ENCODE measurements at regions of chr20 and their contacts with region 1.

Region 1: GRCh38 chr20:43187476-43188233 is 2.1 kb downstream of the PTPRT start:
- DNase-seq: peak; percentile 8
- ATAC-seq: peak; percentile 63
- H3K4me3 ChIP-seq: no peak overlapping the region
- H3K27ac ChIP-seq: no peak overlapping the region
- H3K4me1 ChIP-seq: no peaks in the 10 kb centered on the region
- H3K27me3 ChIP-seq: peaks cover 6% of the 10 kb centered on the region; the same call in 1 of the 2 replicates
- CTCF ChIP-seq: peak; percentile 49 to 96 (median 88); a peak in 5 of 6 replicates
- POLR2A ChIP-seq: no peak
- RAD21 ChIP-seq: peak; percentile 79

Region 2: DNA sequence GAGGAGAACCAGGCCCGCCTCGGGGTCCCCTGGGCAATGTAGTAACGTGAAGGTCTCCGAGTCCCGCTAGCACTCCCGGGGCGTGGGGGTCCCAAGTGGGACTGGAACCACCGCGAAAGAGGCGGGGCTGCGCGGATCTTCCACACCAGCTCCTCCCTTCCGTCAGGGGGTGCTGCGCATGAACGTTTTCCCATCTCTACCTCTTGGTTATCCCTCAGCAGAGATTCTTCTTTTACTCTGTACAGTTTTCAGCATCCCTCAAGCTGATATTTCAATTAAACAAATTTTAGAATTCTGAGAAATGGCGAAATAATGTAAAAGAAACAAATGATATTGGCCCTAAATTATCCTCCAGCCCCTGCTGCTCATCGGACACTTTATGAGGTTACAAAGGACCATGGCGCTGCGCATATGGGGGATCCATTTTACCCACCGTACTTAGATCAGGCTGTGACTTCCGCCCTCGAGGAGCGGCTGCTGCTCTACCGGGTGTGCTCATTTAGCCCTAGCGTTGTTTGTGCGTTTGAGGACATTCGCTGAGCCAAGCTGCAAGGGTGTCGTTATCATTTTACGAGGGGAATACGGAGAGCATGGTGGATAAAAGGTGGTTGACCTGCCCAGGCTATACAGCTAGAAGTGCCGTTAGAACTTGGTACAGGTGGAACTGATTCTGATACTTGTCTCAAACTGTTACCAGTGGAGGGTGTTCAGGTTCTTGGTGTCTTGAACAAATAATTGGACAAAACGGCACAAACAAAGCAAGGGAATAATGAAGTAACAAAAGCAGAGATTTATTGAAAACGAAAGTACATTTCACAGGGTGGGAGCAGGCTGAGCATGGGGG is 1494.3 kb before region 1 on chr20:
- CTCF ChIA-PET with region 1: interaction called, 3 read pairs
- POLR2A ChIA-PET with region 1: no interaction called
- RAD21 ChIA-PET with region 1: no interaction called
- intact Hi-C with region 1: loop called (anchors 1 kb)
- DNase-seq: peak; percentile 90
- ATAC-seq: peak; percentile 90
- H3K4me3 ChIP-seq: peak overlapping the region; percentile 66 to 80
- H3K27ac ChIP-seq: peak overlapping the region; percentile 52
- H3K4me1 ChIP-seq: peaks cover 5 to 13% of the 10 kb centered on the region in 2 experiments; a peak in 3 of 4 replicates
- H3K27me3 ChIP-seq: no peaks in the 10 kb centered on the region
- CTCF ChIP-seq: peak; percentile 38 to 69 (median 41); a peak in 5 of 6 replicates
- POLR2A ChIP-seq: peak; percentile 77
- RAD21 ChIP-seq: no peak

Region 3: DNA sequence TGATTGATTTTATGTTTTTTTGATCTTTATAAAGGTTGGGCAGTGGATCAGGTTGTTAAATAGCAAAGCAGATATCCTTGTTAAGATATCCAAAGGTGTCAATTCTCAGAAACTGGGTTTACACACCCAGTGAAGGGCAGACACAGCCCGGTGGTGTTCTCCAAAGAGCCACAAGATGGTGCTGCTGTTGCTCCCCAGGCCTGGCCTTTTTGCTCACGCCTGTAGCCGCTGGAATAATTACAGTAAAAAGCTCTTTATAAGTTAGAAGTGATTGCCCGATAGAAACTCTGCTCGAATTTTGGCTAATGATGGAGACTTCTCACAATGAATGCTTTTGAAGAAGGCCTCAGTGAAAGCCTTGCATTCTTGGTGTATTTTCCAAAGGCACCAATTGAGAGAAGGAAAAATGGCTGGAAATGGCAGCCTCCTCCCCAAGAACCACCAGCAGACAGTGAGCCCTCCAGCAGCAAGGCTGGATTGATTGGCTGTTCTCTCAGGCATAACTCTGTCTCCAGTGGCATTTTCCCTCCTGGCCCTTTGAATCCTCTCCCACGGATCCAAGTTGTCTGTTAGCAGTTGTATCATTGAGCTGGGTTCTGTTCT is 1449.0 kb before region 1 on chr20:
- CTCF ChIA-PET with region 1: interaction called, 16 read pairs
- POLR2A ChIA-PET with region 1: no interaction called
- RAD21 ChIA-PET with region 1: interaction called in 1 of 2 experiments, 4 read pairs
- intact Hi-C with region 1: loop called (anchors 1 kb)
- DNase-seq: peak; percentile 32
- ATAC-seq: peak; percentile 84
- H3K4me3 ChIP-seq: no peak overlapping the region
- H3K27ac ChIP-seq: no peak overlapping the region
- H3K4me1 ChIP-seq: no peaks in the 10 kb centered on the region
- H3K27me3 ChIP-seq: peaks cover 4% of the 10 kb centered on the region; the same call in 1 of the 2 replicates
- CTCF ChIP-seq: peak; percentile 47 to 95 (median 90); a peak in 5 of 6 replicates
- POLR2A ChIP-seq: no peak
- RAD21 ChIP-seq: peak; percentile 75

Region 4: GRCh38 chr20:41955999-41956705 is 1231.5 kb before region 1 on chr20:
- CTCF ChIA-PET with region 1: no interaction called
- POLR2A ChIA-PET with region 1: no interaction called
- RAD21 ChIA-PET with region 1: no interaction called
- intact Hi-C with region 1: loop called (anchors 1 kb)
- DNase-seq: no peak
- ATAC-seq: no peak
- H3K4me3 ChIP-seq: no peak overlapping the region
- H3K27ac ChIP-seq: no peak overlapping the region
- H3K4me1 ChIP-seq: no peaks in the 10 kb centered on the region
- H3K27me3 ChIP-seq: no peaks in the 10 kb centered on the region
- CTCF ChIP-seq: peak in 2 of 3 experiments; percentile 29 to 58; a peak in 3 of 6 replicates
- POLR2A ChIP-seq: no peak
- RAD21 ChIP-seq: peak; percentile 15; the same call in 1 of the 2 replicates

Region 5: GRCh38 chr20:42565235-42565995 is 622.2 kb before region 1 on chr20:
- CTCF ChIA-PET with region 1: no interaction called
- POLR2A ChIA-PET with region 1: no interaction called
- RAD21 ChIA-PET with region 1: no interaction called
- intact Hi-C with region 1: no loop called
- DNase-seq: no peak
- ATAC-seq: no peak
- H3K4me3 ChIP-seq: no peak overlapping the region
- H3K27ac ChIP-seq: no peak overlapping the region
- H3K4me1 ChIP-seq: no peaks in the 10 kb centered on the region
- H3K27me3 ChIP-seq: no peaks in the 10 kb centered on the region
- CTCF ChIP-seq: no peak
- POLR2A ChIP-seq: no peak
- RAD21 ChIP-seq: no peak

Region 6: GRCh38 chr20:43408848-43409576 is 221.4 kb after region 1 on chr20:
- CTCF ChIA-PET with region 1: interaction called, 4 read pairs
- POLR2A ChIA-PET with region 1: no interaction called
- RAD21 ChIA-PET with region 1: no interaction called
- intact Hi-C with region 1: loop called (anchors 5 kb)
- DNase-seq: peak; percentile 51
- ATAC-seq: peak; percentile 86
- H3K4me3 ChIP-seq: no peak overlapping the region
- H3K27ac ChIP-seq: no peak overlapping the region
- H3K4me1 ChIP-seq: 0 out of 4 replicates have a peak, but pooled peaks cover 0 to 3% of the 10 kb centered on the region in 2 experiments
- H3K27me3 ChIP-seq: no peaks in the 10 kb centered on the region; the same call in 1 of the 2 replicates
- CTCF ChIP-seq: peak; percentile 56 to 94 (median 78); a peak in 5 of 6 replicates
- POLR2A ChIP-seq: no peak
- RAD21 ChIP-seq: peak; percentile 84

Region 7: DNA sequence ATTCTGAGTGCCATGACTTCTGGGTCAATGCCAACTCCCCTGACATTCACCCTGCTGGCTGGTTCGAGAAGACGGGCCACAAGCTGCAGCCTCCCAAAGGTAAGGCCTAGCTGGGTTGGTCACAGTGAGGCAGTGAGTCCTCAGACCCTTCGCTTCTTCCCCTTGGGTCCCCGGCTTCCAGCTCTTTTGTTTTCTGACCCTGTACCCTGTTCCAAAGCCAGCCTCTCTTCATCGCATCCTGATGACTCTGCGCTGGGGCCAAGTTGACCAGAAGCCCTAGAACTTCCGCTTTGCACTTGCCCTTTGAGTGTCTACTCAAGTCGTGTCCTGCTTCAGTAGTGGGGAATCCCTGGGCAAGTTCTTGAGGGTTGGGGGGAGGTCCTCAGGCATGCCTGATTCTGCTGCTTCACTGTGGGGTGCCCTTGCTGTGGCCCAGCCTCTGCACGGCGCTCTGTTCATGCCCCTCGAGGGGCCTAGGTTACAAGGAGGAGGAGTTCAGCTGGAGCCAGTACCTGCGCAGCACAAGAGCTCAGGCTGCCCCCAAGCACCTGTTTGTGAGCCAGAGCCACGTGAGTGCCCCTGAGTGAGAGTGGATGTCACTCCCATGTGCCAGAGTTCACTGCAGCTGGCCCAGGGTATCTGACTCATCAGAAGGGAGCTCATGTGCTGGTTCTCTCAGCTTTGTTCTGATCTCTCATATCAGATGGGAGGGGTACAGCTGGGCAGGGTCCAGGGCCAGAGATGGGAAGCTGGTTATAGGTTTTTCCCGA is 342.9 kb after region 1 on chr20:
- CTCF ChIA-PET with region 1: no interaction called
- POLR2A ChIA-PET with region 1: no interaction called
- RAD21 ChIA-PET with region 1: no interaction called
- intact Hi-C with region 1: no loop called
- DNase-seq: no peak
- ATAC-seq: peak; percentile 42; the same call in 1 of the 2 replicates
- H3K4me3 ChIP-seq: no peak overlapping the region
- H3K27ac ChIP-seq: no peak overlapping the region
- H3K4me1 ChIP-seq: no peaks in the 10 kb centered on the region
- H3K27me3 ChIP-seq: no peaks in the 10 kb centered on the region
- CTCF ChIP-seq: no peak
- POLR2A ChIP-seq: no peak
- RAD21 ChIP-seq: no peak